ENCODE measurements at regions of chr3 and their contacts with region 1.

Region 1: GRCh38 chr3:182081096-182081495 is 369.4 kb downstream of the SOX2 start:
- DNase-seq: no peak
- ATAC-seq: no peak
- H3K4me3 ChIP-seq: no peak overlapping the region
- H3K4me3 Mint-ChIP-seq: no peak overlapping the region
- H3K27ac ChIP-seq: no peak overlapping the region
- H3K27ac Mint-ChIP-seq: no peak overlapping the region
- H3K4me1 ChIP-seq: no peaks in the 10 kb centered on the region
- H3K4me1 Mint-ChIP-seq: no peaks in the 10 kb centered on the region
- H3K27me3 ChIP-seq: no peaks in the 10 kb centered on the region
- H3K27me3 Mint-ChIP-seq: no peaks in the 10 kb centered on the region

Region 2: GRCh38 chr3:181919375-181919774 is 161.7 kb before region 1 on chr3:
- CTCF ChIA-PET with region 1: interaction called in 1 of 2 experiments, 3 read pairs
- POLR2A ChIA-PET with region 1: interaction called in 1 of 2 experiments, 15 read pairs
- DNase-seq: no peak
- ATAC-seq: no peak
- H3K4me3 ChIP-seq: no peak overlapping the region
- H3K4me3 Mint-ChIP-seq: no peak overlapping the region
- H3K27ac ChIP-seq: no peak overlapping the region
- H3K27ac Mint-ChIP-seq: no peak overlapping the region
- H3K4me1 ChIP-seq: no peaks in the 10 kb centered on the region
- H3K4me1 Mint-ChIP-seq: no peaks in the 10 kb centered on the region
- H3K27me3 ChIP-seq: no peaks in the 10 kb centered on the region
- H3K27me3 Mint-ChIP-seq: no peaks in the 10 kb centered on the region